Ascending aorta (tissue), 2 donors: ENCODE measurements at regions of chr1 and their contacts with region 1.

Region 1: GRCh38 chr1:51666478-51666877 is 49.6 kb downstream of the OSBPL9 start:
- DNase-seq: peak in 1 of 2 donors; percentile 76
- H3K4me3 ChIP-seq: no peak overlapping the region
- H3K27ac ChIP-seq: peak overlapping the region; percentile 80 to 83
- H3K4me1 ChIP-seq: peaks cover 7 to 71% of the 10 kb centered on the region in 2 donors
- H3K27me3 ChIP-seq: no peaks in the 10 kb centered on the region
- CTCF ChIP-seq: no peak

Region 2: GRCh38 chr1:51736702-51737101 is 70.2 kb after region 1 on chr1:
- intact Hi-C with region 1: loop called (anchors 5 kb)
- DNase-seq: no peak
- H3K4me3 ChIP-seq: no peak overlapping the region
- H3K27ac ChIP-seq: peak overlapping the region; percentile 0 to 44
- H3K4me1 ChIP-seq: peaks cover 0 to 31% of the 10 kb centered on the region in 2 donors
- H3K27me3 ChIP-seq: no peaks in the 10 kb centered on the region
- CTCF ChIP-seq: no peak

Region 3: DNA sequence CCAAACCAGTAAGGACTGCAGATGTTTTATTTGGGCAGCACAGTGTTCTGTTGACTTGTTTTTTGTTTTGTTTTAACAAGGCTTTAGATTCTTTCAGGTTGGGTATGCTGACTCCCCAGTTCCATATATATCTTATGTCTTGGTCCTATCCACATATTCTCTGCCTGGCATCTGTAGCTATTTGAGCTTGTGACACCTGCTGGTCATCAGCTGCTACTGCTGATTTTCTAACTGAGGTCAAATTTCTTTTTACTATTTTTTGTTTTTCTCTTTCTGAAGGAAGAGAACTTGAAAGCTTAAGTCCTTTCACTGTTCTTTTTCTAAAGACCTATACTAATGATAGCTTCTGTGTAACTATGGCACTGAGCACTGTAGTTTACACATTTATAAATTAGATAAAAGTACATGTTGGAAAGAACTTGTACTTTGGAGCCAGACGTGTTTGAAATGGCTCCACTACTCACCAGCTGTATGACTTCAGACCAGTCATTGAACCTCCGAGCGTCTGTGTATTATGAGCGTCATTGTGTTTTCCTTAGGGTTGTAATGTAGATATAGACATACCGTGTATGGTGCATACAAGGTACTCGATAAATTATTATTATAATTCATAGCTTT is 102.6 kb after region 1 on chr1:
- intact Hi-C with region 1: loop called (anchors 5 kb)
- DNase-seq: no peak
- H3K4me3 ChIP-seq: no peak overlapping the region
- H3K27ac ChIP-seq: peak overlapping the region; percentile 29 to 43
- H3K4me1 ChIP-seq: peaks cover 0 to 2% of the 10 kb centered on the region in 2 donors
- H3K27me3 ChIP-seq: no peaks in the 10 kb centered on the region
- CTCF ChIP-seq: peak; percentile 74 to 88 (median 80)